Heart right ventricle (tissue), 16 donors: ENCODE measurements at regions of chr2 and their contacts with region 1.

Region 1: GRCh38 chr2:135169900-135170753 is 118.0 kb downstream of the RAB3GAP1 start:
- DNase-seq: no peak
- ATAC-seq: no peak
- H3K4me3 ChIP-seq: no peak overlapping the region
- H3K27ac ChIP-seq: no peak overlapping the region
- H3K4me1 ChIP-seq: no peaks in the 10 kb centered on the region
- H3K27me3 ChIP-seq: no peaks in the 10 kb centered on the region
- CTCF ChIP-seq: no peak

Region 2: GRCh38 chr2:135124924-135125886 is 44.9 kb before region 1 on chr2:
- intact Hi-C with region 1: loop called in 1 of 10 experiments (anchors 5 kb)
- DNase-seq: no peak
- ATAC-seq: no peak
- H3K4me3 ChIP-seq: no peak overlapping the region
- H3K27ac ChIP-seq: no peak overlapping the region
- H3K4me1 ChIP-seq: peaks cover 0 to 5% (median 0%) of the 10 kb centered on the region in 9 donors
- H3K27me3 ChIP-seq: no peaks in the 10 kb centered on the region
- CTCF ChIP-seq: no peak

Region 3: GRCh38 chr2:135140606-135141005 is 29.5 kb before region 1 on chr2:
- intact Hi-C with region 1: no loop called
- DNase-seq: no peak
- ATAC-seq: no peak
- H3K4me3 ChIP-seq: no peak overlapping the region
- H3K27ac ChIP-seq: no peak overlapping the region
- H3K4me1 ChIP-seq: no peaks in the 10 kb centered on the region
- H3K27me3 ChIP-seq: no peaks in the 10 kb centered on the region
- CTCF ChIP-seq: no peak